Heart left ventricle (tissue), 16 donors: ENCODE measurements at regions of chr9 and their contacts with region 1.

Region 1: DNA sequence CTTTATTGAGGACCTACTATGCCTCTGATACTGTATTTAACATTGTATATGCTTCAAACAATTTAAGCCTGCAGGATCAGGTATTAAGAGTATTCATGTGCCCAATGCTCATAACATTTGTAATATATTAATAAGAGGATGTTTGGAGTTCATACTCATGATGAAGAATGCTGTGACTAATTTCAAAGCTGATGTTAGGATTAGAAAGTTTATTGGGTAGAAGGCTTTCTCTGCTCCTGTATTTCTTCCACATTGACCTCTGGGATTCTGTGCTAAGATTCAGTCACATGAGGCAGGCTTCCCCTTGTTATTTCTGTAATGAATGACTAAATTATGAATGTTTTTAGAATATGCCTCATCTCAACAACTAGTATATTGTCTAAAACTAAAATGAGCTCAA is 456.4 kb downstream of the NFIB start:
- DNase-seq: no peak
- ATAC-seq: no peak
- H3K4me3 ChIP-seq: no peak overlapping the region
- H3K27ac ChIP-seq: no peak overlapping the region
- H3K4me1 ChIP-seq: peaks cover 0 to 29% (median 9%) of the 10 kb centered on the region in 12 donors
- H3K27me3 ChIP-seq: no peaks in the 10 kb centered on the region
- CTCF ChIP-seq: no peak
- POLR2A ChIP-seq: no peak

Region 2: GRCh38 chr9:13719981-13720676 is 137.4 kb before region 1 on chr9:
- intact Hi-C with region 1: loop called in 2 of 10 experiments (anchors 5 to 10 kb)
- DNase-seq: no peak
- ATAC-seq: peak in 1 of 4 donors; percentile 41
- H3K4me3 ChIP-seq: no peak overlapping the region
- H3K27ac ChIP-seq: peak overlapping the region in 1 of 12 donors; percentile 10
- H3K4me1 ChIP-seq: peaks cover 0 to 36% (median 14%) of the 10 kb centered on the region in 12 donors
- H3K27me3 ChIP-seq: no peaks in the 10 kb centered on the region
- CTCF ChIP-seq: no peak
- POLR2A ChIP-seq: no peak

Region 3: GRCh38 chr9:13911473-13911872 is 54.0 kb after region 1 on chr9:
- intact Hi-C with region 1: no loop called
- DNase-seq: no peak
- ATAC-seq: no peak
- H3K4me3 ChIP-seq: no peak overlapping the region
- H3K27ac ChIP-seq: no peak overlapping the region
- H3K4me1 ChIP-seq: peaks cover 0 to 20% (median 3%) of the 10 kb centered on the region in 12 donors
- H3K27me3 ChIP-seq: no peaks in the 10 kb centered on the region
- CTCF ChIP-seq: no peak
- POLR2A ChIP-seq: no peak

Region 4: DNA sequence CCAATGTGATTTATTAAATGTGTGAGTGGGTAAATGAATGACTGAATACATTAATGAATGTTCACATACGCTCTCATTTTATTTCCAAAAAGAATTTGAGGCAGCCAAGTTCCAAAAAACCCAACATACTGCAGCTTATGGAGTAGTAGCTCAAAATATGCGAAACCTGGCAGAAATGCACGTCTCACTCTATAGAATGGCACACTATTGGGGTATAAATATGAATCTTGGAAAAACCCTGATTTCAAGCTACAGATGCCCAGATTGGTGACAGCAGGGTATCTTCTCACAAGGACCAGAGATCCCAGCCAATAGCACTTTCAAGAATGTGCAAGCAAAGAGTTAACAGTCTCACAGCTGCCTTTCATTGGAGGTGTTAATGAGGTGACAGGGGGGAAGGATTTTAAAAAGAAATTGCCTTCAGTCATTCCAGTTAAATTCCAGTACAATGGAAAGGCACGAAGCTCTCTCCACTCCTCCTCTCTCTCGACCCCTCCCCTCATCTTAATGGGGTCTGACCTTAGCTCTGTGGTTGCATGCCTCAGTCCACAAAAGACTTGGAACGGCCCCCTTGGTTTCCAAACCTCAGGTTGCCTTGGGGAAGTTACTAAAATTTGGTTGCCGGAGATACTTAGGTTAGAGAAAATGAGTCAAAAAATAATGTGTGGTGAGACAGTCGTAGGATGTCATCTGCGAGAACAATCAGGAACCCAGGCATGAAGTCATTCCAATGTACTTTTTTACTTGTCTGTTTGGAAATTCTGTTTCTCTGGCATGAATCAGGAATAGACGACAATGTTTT is 149.1 kb after region 1 on chr9:
- intact Hi-C with region 1: loop called in 1 of 10 experiments (anchors 10 kb)
- DNase-seq: no peak
- ATAC-seq: no peak
- H3K4me3 ChIP-seq: no peak overlapping the region
- H3K27ac ChIP-seq: no peak overlapping the region
- H3K4me1 ChIP-seq: peaks cover 0 to 5% (median 0%) of the 10 kb centered on the region in 12 donors
- H3K27me3 ChIP-seq: no peaks in the 10 kb centered on the region
- CTCF ChIP-seq: no peak
- POLR2A ChIP-seq: no peak